Motor neuron (in vitro differentiated cells): ENCODE measurements at regions of chr15 and their contacts with region 1.

Region 1: GRCh38 chr15:84955089-84955848 is 26.4 kb upstream of the PDE8A start:
- ATAC-seq: peak; percentile 68 to 100 (median 98)
- H3K4me3 ChIP-seq: no peak overlapping the region
- H3K27ac ChIP-seq: no peak overlapping the region
- H3K4me1 ChIP-seq: no peaks in the 10 kb centered on the region

Region 2: DNA sequence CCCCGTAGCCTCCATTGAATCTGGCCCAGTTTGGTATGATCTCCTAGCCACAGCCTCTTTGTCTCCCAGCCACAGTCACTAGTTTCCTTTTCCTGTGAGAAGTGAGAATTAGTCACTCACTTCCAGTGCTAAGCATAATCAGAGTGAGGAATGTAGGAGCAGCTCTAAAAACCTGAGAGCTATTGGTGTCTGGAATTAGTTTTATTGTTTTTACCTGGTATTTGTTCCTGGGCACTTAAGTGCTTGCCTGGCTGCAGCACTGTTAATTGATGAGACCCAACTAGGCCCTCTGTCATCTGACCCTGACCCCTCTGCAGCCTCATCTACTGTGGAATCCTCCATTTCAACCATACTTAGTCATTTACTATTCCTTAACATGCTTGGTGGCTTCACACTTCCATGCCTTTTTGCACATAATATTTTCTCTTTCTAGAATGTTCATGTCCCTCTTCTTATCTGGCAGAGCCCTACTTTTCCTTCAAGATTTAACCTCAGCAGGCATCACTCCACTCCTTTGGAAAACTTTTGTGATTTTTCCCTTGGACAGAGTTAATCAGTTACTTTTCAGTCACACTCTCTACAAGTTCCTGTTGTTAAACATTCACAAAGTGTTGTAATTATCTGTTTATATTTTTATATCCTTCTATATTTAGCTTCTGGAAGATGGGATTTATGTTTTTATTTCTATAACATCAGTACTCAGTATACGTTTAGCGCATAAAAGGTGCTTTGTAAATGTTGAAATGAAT is 75.2 kb after region 1 on chr15:
- in situ Hi-C with region 1: no loop called
- ATAC-seq: peak in 4 of 8 experiments; percentile 10 to 67 (median 33)
- H3K4me3 ChIP-seq: no peak overlapping the region
- H3K27ac ChIP-seq: no peak overlapping the region
- H3K4me1 ChIP-seq: peaks cover 0 to 2% of the 10 kb centered on the region in 2 donors

Region 3: GRCh38 chr15:85063126-85064079 is 108.1 kb after region 1 on chr15:
- in situ Hi-C with region 1: no loop called
- ATAC-seq: peak in 2 of 8 experiments; percentile 50 to 85
- H3K4me3 ChIP-seq: no peak overlapping the region
- H3K27ac ChIP-seq: no peak overlapping the region
- H3K4me1 ChIP-seq: no peaks in the 10 kb centered on the region

Region 4: DNA sequence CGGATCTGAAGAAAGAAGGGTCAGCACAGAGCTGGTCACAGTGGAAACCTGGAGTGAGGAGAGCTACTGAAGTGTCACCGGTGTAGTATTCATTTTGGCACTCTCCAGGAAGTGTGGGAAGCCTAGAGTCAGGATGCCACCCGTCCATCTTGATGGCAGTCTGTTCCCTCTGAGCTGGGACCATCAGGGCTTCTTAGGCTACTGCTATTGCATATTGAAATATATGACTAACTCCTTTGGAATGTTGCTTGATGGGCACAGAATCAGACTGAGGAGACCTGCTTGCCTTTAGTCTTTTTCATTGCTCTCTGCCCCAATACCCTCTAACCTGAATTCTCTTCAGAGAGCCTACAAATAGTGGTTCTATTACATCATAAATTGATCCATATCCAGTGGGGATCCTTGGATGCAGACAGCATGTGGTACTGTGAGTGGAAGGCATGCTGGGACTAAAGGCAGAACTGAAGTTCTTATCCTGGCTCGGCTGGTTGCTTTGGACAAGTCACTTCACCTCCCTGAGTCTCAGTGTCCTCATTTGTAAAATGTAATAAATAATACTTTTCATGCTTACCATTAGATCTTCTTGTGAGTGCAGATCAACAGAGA is 169.9 kb after region 1 on chr15:
- in situ Hi-C with region 1: loop called in 1 of 9 experiments (anchors 25 kb)
- ATAC-seq: peak in 3 of 8 experiments; percentile 77 to 97 (median 82)
- H3K4me3 ChIP-seq: no peak overlapping the region
- H3K27ac ChIP-seq: no peak overlapping the region
- H3K4me1 ChIP-seq: no peaks in the 10 kb centered on the region